Sigmoid colon (tissue), 7 donors: ENCODE measurements at regions of chr5 and their contacts with region 1.

Region 1: DNA sequence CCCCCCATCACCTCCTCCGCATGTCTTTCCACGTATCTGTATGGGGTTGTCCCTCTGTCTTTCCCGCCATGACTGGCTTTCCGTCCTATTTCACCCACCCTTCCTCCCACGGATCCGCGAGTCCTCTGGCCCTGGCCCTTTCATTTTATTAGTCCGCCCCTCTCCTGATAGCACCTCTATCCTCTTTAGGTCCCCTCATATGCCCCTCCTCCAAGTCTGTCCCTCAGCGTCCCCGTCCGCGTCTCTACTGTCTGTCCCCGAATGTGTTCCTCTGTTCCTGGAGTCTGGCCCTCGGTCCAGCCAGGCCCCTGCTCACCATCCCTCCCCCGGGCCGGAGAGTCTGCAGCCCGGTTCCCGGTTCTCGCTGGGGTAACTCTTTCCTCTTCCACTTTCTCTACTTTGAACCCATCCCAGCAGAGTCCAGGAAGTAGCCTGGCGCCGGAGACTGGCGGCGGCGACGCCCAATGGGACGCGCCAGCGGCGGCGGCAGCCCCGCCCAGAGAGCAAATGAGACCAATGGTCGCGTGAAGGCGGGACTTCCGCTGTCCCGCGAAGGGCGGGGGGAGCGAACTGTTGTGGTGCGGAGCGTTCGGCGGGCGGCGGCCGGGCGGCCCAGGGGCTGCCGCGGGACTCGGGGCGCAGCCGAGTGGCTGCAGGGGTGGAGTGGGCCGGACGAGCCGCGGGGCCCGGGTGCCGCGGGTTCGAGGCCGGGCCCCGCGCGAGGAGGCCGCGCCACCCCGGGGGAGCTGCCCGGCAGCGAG is at the start of gene SAP30L:
- DNase-seq: peak; percentile 97
- H3K4me3 ChIP-seq: peak within 1 kb of the TSS; percentile 77 to 94 (median 84)
- H3K27ac ChIP-seq: peak within 1 kb of the TSS; percentile 90 to 93 (median 92)
- H3K4me1 ChIP-seq: peaks cover 0 to 41% (median 33%) of the 10 kb centered on the region in 4 donors
- H3K27me3 ChIP-seq: no peaks in the 10 kb centered on the region
- CTCF ChIP-seq: no peak
- EP300 ChIP-seq: no peak
- POLR2A ChIP-seq: peak; percentile 81
- total RNA-seq, gene SAP30L: 36.0 to 51.7 (median 42.9) TPM

Region 2: GRCh38 chr5:154923441-154924430 is 478.1 kb after region 1 on chr5:
- intact Hi-C with region 1: loop called (anchors 10 kb)
- DNase-seq: no peak
- H3K4me3 ChIP-seq: no peak overlapping the region
- H3K27ac ChIP-seq: no peak overlapping the region
- H3K4me1 ChIP-seq: no peaks in the 10 kb centered on the region
- H3K27me3 ChIP-seq: no peaks in the 10 kb centered on the region
- CTCF ChIP-seq: no peak
- EP300 ChIP-seq: no peak
- POLR2A ChIP-seq: no peak